Adrenal gland (tissue), 19 donors: ENCODE measurements at regions of chr10 and their contacts with region 1.

Region 1: DNA sequence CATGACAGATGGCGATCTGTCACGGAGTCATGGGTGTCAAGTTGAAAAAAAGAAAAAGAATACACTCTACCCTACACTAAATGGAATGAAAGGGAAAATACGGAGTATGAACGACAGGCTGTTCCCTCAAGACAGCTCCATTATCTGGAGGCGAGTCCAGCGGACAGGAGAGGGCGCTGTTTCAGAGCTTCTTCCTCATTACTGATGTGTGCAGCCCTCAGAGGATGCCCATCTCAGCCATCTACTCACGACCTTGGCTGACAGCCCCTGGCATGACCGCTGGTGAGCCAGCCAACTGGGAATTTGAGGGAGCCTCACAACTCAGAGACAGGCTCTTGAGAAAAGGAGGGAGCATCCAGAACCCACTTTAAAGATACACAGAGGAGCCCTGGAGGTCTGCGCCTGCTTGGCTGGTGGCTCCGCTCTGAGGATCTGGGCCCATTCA is 49.6 kb upstream of the SMNDC1 start:
- DNase-seq: peak; percentile 84 to 97 (median 93)
- H3K4me3 ChIP-seq: no peak overlapping the region
- H3K27ac ChIP-seq: peak overlapping the region in 3 of 5 donors; percentile 13 to 76 (median 64)
- H3K4me1 ChIP-seq: peaks cover 0 to 18% of the 10 kb centered on the region in 2 donors
- H3K27me3 ChIP-seq: no peaks in the 10 kb centered on the region
- CTCF ChIP-seq: peak; percentile 75 to 95 (median 82)
- POLR2A ChIP-seq: no peak

Region 2: DNA sequence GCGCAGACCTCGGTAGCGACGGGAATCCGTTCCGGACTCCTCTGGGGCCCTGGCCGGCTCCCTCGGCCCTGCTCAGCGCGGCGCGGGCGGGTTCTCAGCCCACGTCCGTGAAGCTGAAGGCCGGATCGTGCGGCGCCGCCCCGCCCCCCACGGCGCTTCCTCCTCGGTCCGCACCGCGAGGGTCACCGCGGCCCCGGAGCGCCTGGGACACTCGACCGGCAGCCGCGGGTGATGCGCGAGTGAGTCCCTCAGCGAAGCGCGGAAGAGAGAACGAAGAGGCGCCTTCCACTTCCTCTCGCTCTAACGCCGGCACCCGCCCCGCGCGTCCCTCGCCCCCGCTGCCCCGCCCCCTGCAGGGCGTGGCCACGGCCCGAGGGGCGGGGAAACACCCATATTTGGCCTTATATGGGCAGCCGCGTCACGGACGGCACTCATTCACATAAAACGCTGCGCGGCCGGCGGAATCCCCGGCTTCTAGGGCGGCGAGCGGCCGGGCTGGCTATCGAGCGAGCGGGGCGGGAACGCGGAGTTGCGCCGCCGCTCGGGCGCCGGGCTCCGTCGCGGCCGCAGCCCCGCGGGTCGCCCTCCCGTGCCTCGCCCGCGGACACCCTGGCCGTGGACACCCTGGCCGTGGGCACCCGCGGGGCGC is 143.2 kb after region 1 on chr10 and contains the start of gene DUSP5:
- intact Hi-C with region 1: loop called in 1 of 2 experiments (anchors 10 kb)
- DNase-seq: peak; percentile 92 to 97 (median 96)
- H3K4me3 ChIP-seq: peak within 1 kb of the TSS; percentile 22 to 90 (median 46)
- H3K27ac ChIP-seq: peak within 1 kb of the TSS; percentile 87 to 98 (median 95)
- H3K4me1 ChIP-seq: peaks cover 21 to 56% of the 10 kb centered on the region in 2 donors
- H3K27me3 ChIP-seq: no peaks in the 10 kb centered on the region
- CTCF ChIP-seq: no peak
- POLR2A ChIP-seq: peak; percentile 93 to 98
- total RNA-seq, gene DUSP5: 12.4 to 61.7 (median 17.6) TPM

Region 3: GRCh38 chr10:110547139-110547761 is 192.9 kb after region 1 on chr10:
- intact Hi-C with region 1: loop called in 1 of 2 experiments (anchors 2 kb)
- DNase-seq: no peak
- H3K4me3 ChIP-seq: no peak overlapping the region
- H3K27ac ChIP-seq: no peak overlapping the region
- H3K4me1 ChIP-seq: no peaks in the 10 kb centered on the region
- H3K27me3 ChIP-seq: peaks cover 3% of the 10 kb centered on the region
- CTCF ChIP-seq: peak; percentile 79 to 90 (median 87)
- POLR2A ChIP-seq: no peak

Region 4: GRCh38 chr10:110923856-110924493 is 569.6 kb after region 1 on chr10:
- intact Hi-C with region 1: no loop called
- DNase-seq: no peak
- H3K4me3 ChIP-seq: no peak overlapping the region
- H3K27ac ChIP-seq: no peak overlapping the region
- H3K4me1 ChIP-seq: peaks cover 8 to 36% of the 10 kb centered on the region in 2 donors
- H3K27me3 ChIP-seq: no peaks in the 10 kb centered on the region
- CTCF ChIP-seq: no peak
- POLR2A ChIP-seq: no peak